Heart left ventricle (tissue), 16 donors: ENCODE measurements at regions of chr3 and their contacts with region 1.

Region 1: DNA sequence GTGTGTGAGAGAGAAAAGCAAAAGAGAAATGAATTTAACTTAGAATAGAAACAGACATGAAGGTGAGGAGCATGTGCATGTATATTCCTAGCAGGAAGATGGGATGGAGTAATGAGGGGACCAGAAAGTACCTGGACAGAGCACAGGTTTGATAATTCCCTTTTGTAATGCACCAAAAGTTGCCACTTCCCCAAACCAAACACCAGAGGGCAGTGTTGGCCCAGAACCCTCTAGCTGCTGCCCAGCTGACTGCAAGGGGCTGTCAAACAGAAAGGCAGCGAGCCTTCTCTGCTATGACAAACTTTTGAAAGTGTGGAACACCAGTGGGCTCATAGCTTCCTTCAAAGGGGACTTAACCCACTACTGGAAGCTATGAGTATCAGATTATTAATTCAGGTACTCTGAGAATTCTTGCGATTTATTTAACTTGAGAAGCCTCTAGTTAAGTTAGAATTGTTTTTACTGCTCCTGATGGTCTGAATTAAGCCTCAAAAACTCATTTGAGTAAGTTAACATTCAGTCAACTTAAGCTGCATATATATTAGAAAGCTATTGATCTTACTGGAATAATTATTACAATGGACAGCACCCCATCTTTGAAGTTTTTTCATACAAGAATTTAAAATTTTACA is 234.9 kb downstream of the NEK10 start:
- DNase-seq: peak; percentile 53 to 62 (median 57)
- ATAC-seq: peak; percentile 35 to 81 (median 77)
- H3K4me3 ChIP-seq: no peak overlapping the region
- H3K27ac ChIP-seq: no peak overlapping the region
- H3K4me1 ChIP-seq: peaks cover 0 to 7% (median 0%) of the 10 kb centered on the region in 12 donors
- H3K27me3 ChIP-seq: no peaks in the 10 kb centered on the region
- CTCF ChIP-seq: peak; percentile 80 to 95 (median 88)
- POLR2A ChIP-seq: no peak

Region 2: GRCh38 chr3:26967501-26967900 is 166.8 kb before region 1 on chr3:
- intact Hi-C with region 1: no loop called
- DNase-seq: no peak
- ATAC-seq: no peak
- H3K4me3 ChIP-seq: no peak overlapping the region
- H3K27ac ChIP-seq: no peak overlapping the region
- H3K4me1 ChIP-seq: no peaks in the 10 kb centered on the region
- H3K27me3 ChIP-seq: no peaks in the 10 kb centered on the region
- CTCF ChIP-seq: no peak
- POLR2A ChIP-seq: no peak

Region 3: GRCh38 chr3:27079427-27080257 is 54.6 kb before region 1 on chr3:
- intact Hi-C with region 1: no loop called
- DNase-seq: peak in 3 of 5 donors; percentile 21 to 25 (median 22)
- ATAC-seq: peak in 2 of 4 donors; percentile 49 to 65
- H3K4me3 ChIP-seq: no peak overlapping the region
- H3K27ac ChIP-seq: peak overlapping the region in 2 of 12 donors; percentile 21 to 37
- H3K4me1 ChIP-seq: peaks cover 0 to 24% (median 2%) of the 10 kb centered on the region in 12 donors
- H3K27me3 ChIP-seq: no peaks in the 10 kb centered on the region
- CTCF ChIP-seq: no peak
- POLR2A ChIP-seq: no peak

Region 4: GRCh38 chr3:27194494-27195458 is 60.5 kb after region 1 on chr3:
- intact Hi-C with region 1: loop called in 1 of 10 experiments (anchors 10 kb)
- DNase-seq: no peak
- ATAC-seq: no peak
- H3K4me3 ChIP-seq: no peak overlapping the region
- H3K27ac ChIP-seq: no peak overlapping the region
- H3K4me1 ChIP-seq: peaks cover 0 to 8% (median 0%) of the 10 kb centered on the region in 12 donors
- H3K27me3 ChIP-seq: no peaks in the 10 kb centered on the region
- CTCF ChIP-seq: no peak
- POLR2A ChIP-seq: no peak

Region 5: GRCh38 chr3:27244374-27244773 is 110.1 kb after region 1 on chr3:
- intact Hi-C with region 1: loop called in 1 of 10 experiments (anchors 10 kb)
- DNase-seq: no peak
- ATAC-seq: no peak
- H3K4me3 ChIP-seq: no peak overlapping the region
- H3K27ac ChIP-seq: no peak overlapping the region
- H3K4me1 ChIP-seq: no peaks in the 10 kb centered on the region
- H3K27me3 ChIP-seq: no peaks in the 10 kb centered on the region
- CTCF ChIP-seq: no peak
- POLR2A ChIP-seq: no peak

Region 6: GRCh38 chr3:27253831-27254230 is 119.5 kb after region 1 on chr3:
- intact Hi-C with region 1: loop called in 7 of 10 experiments (anchors 1 to 10 kb)
- DNase-seq: peak in 1 of 5 donors; percentile 18
- ATAC-seq: peak; percentile 64 to 73 (median 70)
- H3K4me3 ChIP-seq: no peak overlapping the region
- H3K27ac ChIP-seq: no peak overlapping the region
- H3K4me1 ChIP-seq: no peaks in the 10 kb centered on the region
- H3K27me3 ChIP-seq: no peaks in the 10 kb centered on the region
- CTCF ChIP-seq: peak in 11 of 12 donors; percentile 12 to 50 (median 36)
- POLR2A ChIP-seq: no peak

Region 7: DNA sequence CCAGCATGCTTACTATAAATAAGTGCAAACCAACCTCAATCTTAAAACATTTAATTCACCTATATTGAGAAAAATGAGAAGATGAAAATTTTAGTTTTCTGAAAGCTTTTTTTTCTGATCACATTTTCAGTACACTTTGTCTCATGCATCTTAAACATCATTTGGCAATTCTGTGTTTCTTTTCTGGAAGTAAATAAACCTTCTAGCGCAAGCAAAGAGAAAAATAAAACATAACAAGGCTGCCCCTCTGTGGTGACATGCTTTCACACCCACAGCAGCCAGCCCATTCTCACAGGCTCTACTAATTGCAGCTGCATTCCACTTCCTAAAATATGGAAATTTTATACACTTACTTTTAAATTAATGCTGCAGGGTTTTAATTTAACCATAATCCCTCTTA is 144.8 kb after region 1 on chr3:
- intact Hi-C with region 1: loop called in 9 of 10 experiments (anchors 1 to 10 kb)
- DNase-seq: no peak
- ATAC-seq: no peak
- H3K4me3 ChIP-seq: no peak overlapping the region
- H3K27ac ChIP-seq: no peak overlapping the region
- H3K4me1 ChIP-seq: no peaks in the 10 kb centered on the region
- H3K27me3 ChIP-seq: no peaks in the 10 kb centered on the region
- CTCF ChIP-seq: peak in 10 of 12 donors; percentile 15 to 60 (median 44)
- POLR2A ChIP-seq: no peak

Region 8: GRCh38 chr3:27681245-27681748 is 547.0 kb after region 1 on chr3:
- intact Hi-C with region 1: loop called in 4 of 10 experiments (anchors 2 to 10 kb)
- DNase-seq: peak in 1 of 5 donors; percentile 26
- ATAC-seq: peak in 2 of 4 donors; percentile 42 to 59
- H3K4me3 ChIP-seq: peak overlapping the region in 2 of 12 donors; percentile 7 to 15
- H3K27ac ChIP-seq: peak overlapping the region in 2 of 12 donors; percentile 35 to 55
- H3K4me1 ChIP-seq: peaks cover 0 to 17% (median 0%) of the 10 kb centered on the region in 12 donors
- H3K27me3 ChIP-seq: no peaks in the 10 kb centered on the region
- CTCF ChIP-seq: peak; percentile 29 to 72 (median 60)
- POLR2A ChIP-seq: no peak